ENCODE measurements at regions of chr16 and their contacts with region 1.

Region 1: GRCh38 chr16:49350265-49351095 is 23.1 kb upstream of the C16orf78 start:
- DNase-seq: peak in 1 of 2 donors; percentile 69
- H3K4me3 ChIP-seq: no peak overlapping the region
- H3K27ac ChIP-seq: no peak overlapping the region
- H3K4me1 ChIP-seq: no peaks in the 10 kb centered on the region
- H3K27me3 ChIP-seq: no peaks in the 10 kb centered on the region
- CTCF ChIP-seq: peak; percentile 34 to 65 (median 55)

Region 2: GRCh38 chr16:48687421-48688038 is 663.0 kb before region 1 on chr16:
- intact Hi-C with region 1: loop called (anchors 10 kb)
- DNase-seq: no peak
- H3K4me3 ChIP-seq: no peak overlapping the region
- H3K27ac ChIP-seq: no peak overlapping the region
- H3K4me1 ChIP-seq: no peaks in the 10 kb centered on the region
- H3K27me3 ChIP-seq: no peaks in the 10 kb centered on the region
- CTCF ChIP-seq: peak; percentile 2 to 48 (median 32)

Region 3: DNA sequence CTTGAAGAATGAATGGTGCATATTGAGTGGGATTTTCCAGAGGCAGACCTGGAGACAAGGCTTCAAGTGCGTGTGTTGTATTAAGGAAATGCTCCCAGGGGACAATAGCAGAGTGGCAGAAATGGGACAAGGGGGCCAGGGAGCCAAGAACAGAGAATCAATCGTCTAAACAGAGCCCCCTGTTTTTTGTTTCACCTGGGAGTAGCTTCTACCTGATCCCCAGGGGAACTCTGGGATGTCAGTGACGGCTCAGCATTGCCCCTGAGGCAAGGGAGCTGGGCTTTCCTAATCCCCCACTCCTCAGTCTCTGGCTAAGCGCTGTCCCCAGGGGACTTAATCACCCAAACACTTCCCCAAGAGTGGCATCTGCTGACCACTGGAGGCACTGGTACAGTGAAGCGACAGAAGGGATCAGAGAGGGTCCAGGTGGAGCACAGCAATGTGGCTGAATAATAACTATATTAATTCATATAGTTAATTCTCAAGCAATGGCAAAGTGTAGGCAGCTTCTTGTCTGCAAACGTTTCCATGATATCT is 12.6 kb before region 1 on chr16:
- intact Hi-C with region 1: no loop called
- DNase-seq: no peak
- H3K4me3 ChIP-seq: no peak overlapping the region
- H3K27ac ChIP-seq: no peak overlapping the region
- H3K4me1 ChIP-seq: no peaks in the 10 kb centered on the region
- H3K27me3 ChIP-seq: no peaks in the 10 kb centered on the region
- CTCF ChIP-seq: no peak

Measured in ascending aorta (tissue), 2 donors.